H1 (cell line): ENCODE measurements at regions of chr9 and their contacts with region 1.

Region 1: DNA sequence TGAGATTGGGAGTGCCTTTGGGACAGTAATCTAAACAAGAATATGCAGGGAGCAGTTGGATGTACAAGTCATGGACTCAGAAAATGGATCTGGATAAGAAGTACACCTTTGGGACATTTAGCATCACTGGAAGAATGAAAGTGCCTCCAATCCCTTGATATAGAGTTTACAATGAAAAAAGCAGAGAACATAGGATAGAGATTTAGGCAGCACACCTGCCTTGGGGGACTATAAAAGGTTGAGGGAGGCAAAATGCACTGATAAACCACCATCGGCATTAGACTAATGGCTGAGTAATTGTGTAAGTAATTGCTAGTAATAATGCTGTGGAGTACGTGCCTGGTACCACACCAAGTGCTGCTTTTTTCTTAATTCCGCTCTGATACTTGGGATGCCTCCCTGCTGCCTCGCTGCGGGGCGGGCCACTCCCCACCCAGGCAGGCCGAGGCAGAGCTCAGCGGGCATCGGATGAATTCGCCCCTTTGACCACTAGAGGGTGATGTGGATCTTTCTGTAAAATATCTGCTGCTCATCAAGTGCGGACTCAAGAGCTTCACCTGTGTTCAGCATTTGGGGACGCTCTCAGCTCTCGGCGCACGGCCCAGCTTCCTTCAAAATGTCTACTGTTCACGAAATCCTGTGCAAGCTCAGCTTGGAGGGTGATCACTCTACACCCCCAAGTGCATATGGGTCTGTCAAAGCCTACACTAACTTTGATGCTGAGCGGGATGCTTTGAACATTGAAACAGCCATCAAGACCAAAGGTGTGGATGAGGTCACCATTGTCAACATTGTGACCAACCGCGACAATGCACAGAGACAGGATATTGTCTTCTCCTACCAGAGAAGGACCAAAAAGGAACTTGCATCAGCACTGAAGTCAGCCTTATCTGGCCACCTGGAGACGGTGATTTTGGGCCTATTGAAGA is 99.9 kb downstream of the ANKRD18B start:
- DNase-seq: peak; percentile 77 to 84
- H3K4me3 ChIP-seq: no peak overlapping the region
- H3K27ac ChIP-seq: no peak overlapping the region
- H3K4me1 ChIP-seq: no peaks in the 10 kb centered on the region
- H3K27me3 ChIP-seq: peaks cover 0 to 3% (median 0%) of the 10 kb centered on the region in 4 experiments; a peak in 1 of 7 replicates
- CTCF ChIP-seq: peak; percentile 79 to 98 (median 90)
- EP300 ChIP-seq: no peak
- POLR2A ChIP-seq: no peak
- RAD21 ChIP-seq: peak; percentile 92 to 95

Region 2: DNA sequence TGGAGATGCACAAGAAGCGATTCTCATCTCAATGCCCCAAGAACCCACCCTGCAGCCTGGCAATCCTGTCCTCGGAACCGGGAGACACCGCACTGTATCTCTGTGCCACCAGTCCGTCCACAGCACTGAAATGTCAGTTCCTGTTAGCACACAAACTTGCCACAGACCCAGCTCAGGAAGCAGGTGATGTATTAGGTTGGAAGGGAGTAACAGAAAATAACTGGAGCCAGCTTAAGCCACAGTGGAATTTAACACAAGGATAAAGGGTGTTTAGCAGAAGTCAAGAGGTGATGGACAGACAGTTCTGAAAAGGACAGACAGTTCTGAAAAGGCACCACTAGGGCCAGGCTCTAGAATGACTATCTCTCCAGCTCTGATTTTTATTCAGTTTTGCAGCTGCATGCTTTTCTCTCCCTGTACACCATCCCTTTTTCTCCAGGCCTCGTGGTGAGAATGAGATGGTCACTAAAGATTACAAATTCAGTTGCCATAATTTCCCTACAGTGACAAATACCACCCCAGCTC is 14.5 kb after region 1 on chr9:
- CTCF ChIA-PET with region 1: interaction called, 15 read pairs
- POLR2A ChIA-PET with region 1: no interaction called
- DNase-seq: no peak
- H3K4me3 ChIP-seq: no peak overlapping the region
- H3K27ac ChIP-seq: no peak overlapping the region
- H3K4me1 ChIP-seq: no peaks in the 10 kb centered on the region
- H3K27me3 ChIP-seq: no peaks in the 10 kb centered on the region
- CTCF ChIP-seq: peak in 1 of 3 experiments; percentile 10; a peak in 1 of 4 replicates
- EP300 ChIP-seq: no peak
- POLR2A ChIP-seq: no peak
- RAD21 ChIP-seq: no peak

Region 3: DNA sequence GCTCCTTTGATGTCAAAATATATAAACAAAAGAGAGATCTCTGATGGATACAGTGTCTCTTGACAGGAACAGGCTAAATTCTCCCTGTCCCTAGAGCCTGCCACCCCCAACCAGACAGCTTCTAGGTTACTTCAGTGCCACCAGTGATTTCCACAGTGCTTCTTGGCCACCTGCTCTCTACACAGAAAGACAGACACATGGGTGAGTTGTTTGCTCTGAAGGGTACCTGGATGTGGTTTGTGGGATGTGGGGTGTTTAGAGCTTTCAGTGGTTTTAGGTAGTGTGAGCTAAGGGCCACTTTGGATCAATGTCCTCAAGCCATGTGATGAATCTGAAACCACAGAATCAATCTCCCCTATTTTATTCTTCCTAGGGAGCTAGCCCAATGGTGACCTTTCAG is 25.5 kb after region 1 on chr9:
- CTCF ChIA-PET with region 1: interaction called, 15 read pairs
- POLR2A ChIA-PET with region 1: no interaction called
- DNase-seq: no peak
- H3K4me3 ChIP-seq: no peak overlapping the region
- H3K27ac ChIP-seq: no peak overlapping the region
- H3K4me1 ChIP-seq: no peaks in the 10 kb centered on the region
- H3K27me3 ChIP-seq: no peaks in the 10 kb centered on the region
- CTCF ChIP-seq: no peak
- EP300 ChIP-seq: no peak
- POLR2A ChIP-seq: no peak
- RAD21 ChIP-seq: no peak

Region 4: DNA sequence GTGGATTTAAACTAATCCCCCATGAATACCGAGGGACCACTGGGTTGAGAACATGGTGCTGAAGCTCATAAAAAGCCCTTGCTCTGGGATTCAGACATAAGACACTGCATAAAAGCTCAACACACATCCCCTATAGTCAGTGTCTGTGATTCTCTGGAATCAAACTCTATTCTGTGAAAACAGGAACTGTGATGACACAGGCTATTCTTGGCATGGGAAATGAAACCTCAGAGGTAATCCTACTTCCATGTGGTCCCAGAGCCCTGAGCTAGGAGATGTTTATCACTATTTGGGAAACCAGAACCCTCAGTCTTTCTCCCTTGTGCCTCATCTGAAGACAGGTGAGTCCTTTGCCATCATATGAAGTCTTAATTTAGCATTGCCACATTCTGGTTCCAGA is 36.0 kb after region 1 on chr9:
- CTCF ChIA-PET with region 1: interaction called, 14 read pairs
- POLR2A ChIA-PET with region 1: no interaction called
- DNase-seq: no peak
- H3K4me3 ChIP-seq: no peak overlapping the region
- H3K27ac ChIP-seq: no peak overlapping the region
- H3K4me1 ChIP-seq: no peaks in the 10 kb centered on the region
- H3K27me3 ChIP-seq: no peaks in the 10 kb centered on the region
- CTCF ChIP-seq: no peak
- EP300 ChIP-seq: no peak
- POLR2A ChIP-seq: no peak
- RAD21 ChIP-seq: no peak

Region 5: DNA sequence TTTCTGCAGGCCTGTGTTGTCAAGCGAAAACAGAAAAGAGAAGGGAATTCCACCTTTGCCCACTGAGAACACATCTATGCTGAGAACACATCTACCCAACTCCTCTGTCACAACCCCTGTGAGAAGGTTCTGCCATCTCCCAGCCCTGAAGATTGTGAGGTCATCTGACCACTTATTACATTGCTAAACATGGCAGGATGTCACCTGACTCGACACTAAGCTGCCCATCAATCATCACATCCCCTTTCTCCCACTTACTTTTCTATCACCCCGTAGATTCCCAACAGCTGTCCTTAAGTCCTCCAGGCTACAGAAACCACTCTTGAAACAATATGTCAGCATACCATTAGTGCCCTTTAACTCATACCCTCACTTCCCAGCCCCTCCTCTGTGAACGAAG is 107.2 kb after region 1 on chr9:
- CTCF ChIA-PET with region 1: interaction called, 402 read pairs
- POLR2A ChIA-PET with region 1: no interaction called
- DNase-seq: no peak
- H3K4me3 ChIP-seq: no peak overlapping the region
- H3K27ac ChIP-seq: no peak overlapping the region
- H3K4me1 ChIP-seq: no peaks in the 10 kb centered on the region
- H3K27me3 ChIP-seq: no peaks in the 10 kb centered on the region
- CTCF ChIP-seq: no peak
- EP300 ChIP-seq: no peak
- POLR2A ChIP-seq: no peak
- RAD21 ChIP-seq: no peak

Region 6: GRCh38 chr9:33737811-33738606 is 114.1 kb after region 1 on chr9:
- CTCF ChIA-PET with region 1: interaction called, 15 read pairs
- POLR2A ChIA-PET with region 1: no interaction called
- DNase-seq: peak in 1 of 2 experiments; percentile 65
- H3K4me3 ChIP-seq: no peak overlapping the region
- H3K27ac ChIP-seq: no peak overlapping the region
- H3K4me1 ChIP-seq: no peaks in the 10 kb centered on the region
- H3K27me3 ChIP-seq: no peaks in the 10 kb centered on the region
- CTCF ChIP-seq: peak; percentile 57 to 96 (median 83)
- EP300 ChIP-seq: no peak
- POLR2A ChIP-seq: no peak
- RAD21 ChIP-seq: peak; percentile 82 to 86

Region 7: DNA sequence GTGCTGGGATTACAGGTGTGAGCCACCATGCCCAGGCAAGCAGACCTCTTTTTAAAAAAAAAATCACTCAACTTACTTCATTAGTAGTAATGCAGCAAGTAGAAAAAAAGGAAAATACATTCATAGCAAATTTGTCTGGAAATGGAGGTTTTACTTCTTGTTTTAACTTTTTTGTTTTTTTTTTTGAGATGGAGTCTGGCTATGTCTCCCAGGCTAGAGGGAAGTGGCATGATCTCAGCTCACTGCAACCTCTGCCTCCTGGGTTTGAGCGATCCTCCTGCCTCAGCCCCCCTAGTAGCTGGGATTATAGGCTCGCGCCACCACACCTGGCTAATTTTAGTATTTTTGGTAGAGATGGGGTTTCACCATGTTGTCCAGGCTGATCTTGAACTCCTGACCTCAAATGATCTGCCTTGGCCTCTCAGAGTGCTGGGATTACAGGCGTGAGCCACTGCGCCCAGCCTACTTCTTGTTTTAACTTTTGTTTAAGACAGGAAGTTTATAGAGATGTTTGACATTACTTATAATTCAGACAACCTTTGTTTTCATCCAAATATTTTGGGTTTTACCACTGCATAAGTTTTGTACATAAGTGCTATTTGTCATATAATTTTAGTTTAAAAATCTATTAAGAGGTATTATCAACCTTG is 219.5 kb after region 1 on chr9:
- CTCF ChIA-PET with region 1: no interaction called
- POLR2A ChIA-PET with region 1: no interaction called
- DNase-seq: no peak
- H3K4me3 ChIP-seq: no peak overlapping the region
- H3K27ac ChIP-seq: no peak overlapping the region
- H3K4me1 ChIP-seq: no peaks in the 10 kb centered on the region
- H3K27me3 ChIP-seq: no peaks in the 10 kb centered on the region
- CTCF ChIP-seq: no peak
- EP300 ChIP-seq: no peak
- POLR2A ChIP-seq: no peak
- RAD21 ChIP-seq: no peak